B cell (primary cell): ENCODE measurements at regions of chr2 and their contacts with region 1.

Region 1: GRCh38 chr2:136052369-136053362 is 65.3 kb downstream of the CXCR4 start:
- DNase-seq: peak; percentile 33
- ATAC-seq: peak; percentile 26
- H3K4me3 ChIP-seq: no peak overlapping the region
- H3K4me3 Mint-ChIP-seq: peak overlapping the region; percentile 52
- H3K27ac ChIP-seq: no peak overlapping the region
- H3K27ac Mint-ChIP-seq: peak overlapping the region; percentile 60
- H3K4me1 ChIP-seq: peaks cover 40% of the 10 kb centered on the region in 2 donors
- H3K4me1 Mint-ChIP-seq: peaks cover 63% of the 10 kb centered on the region
- H3K27me3 ChIP-seq: no peaks in the 10 kb centered on the region
- H3K27me3 Mint-ChIP-seq: no peaks in the 10 kb centered on the region
- CTCF ChIP-seq: no peak

Region 2: DNA sequence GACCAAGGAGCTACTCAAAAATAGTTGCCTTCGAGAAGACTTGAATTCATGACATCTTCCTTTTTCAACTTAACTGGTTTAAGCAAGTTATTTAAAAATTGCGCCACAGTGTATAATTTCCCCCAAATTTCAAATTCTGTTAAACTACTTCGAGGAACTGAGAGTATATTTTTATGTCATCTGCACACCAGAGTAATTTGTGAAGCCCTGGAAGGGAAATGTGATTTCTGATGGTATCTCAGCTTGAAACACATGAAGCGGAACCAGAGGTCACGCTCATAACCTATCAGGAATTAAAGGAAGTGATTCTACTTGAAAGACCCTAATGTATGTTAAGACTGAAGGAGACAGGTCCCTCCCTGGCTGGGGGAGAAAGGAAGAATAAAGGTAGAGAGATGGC is 33.4 kb before region 1 on chr2:
- CTCF ChIA-PET with region 1: no interaction called
- POLR2A ChIA-PET with region 1: no interaction called
- intact Hi-C with region 1: loop called (anchors 5 kb)
- DNase-seq: peak; percentile 77
- ATAC-seq: peak; percentile 81
- H3K4me3 ChIP-seq: no peak overlapping the region
- H3K4me3 Mint-ChIP-seq: peak overlapping the region; percentile 7
- H3K27ac ChIP-seq: peak overlapping the region in 1 of 2 donors; percentile 29
- H3K27ac Mint-ChIP-seq: peak overlapping the region; percentile 71
- H3K4me1 ChIP-seq: peaks cover 18 to 24% of the 10 kb centered on the region in 2 donors
- H3K4me1 Mint-ChIP-seq: peaks cover 30% of the 10 kb centered on the region
- H3K27me3 ChIP-seq: no peaks in the 10 kb centered on the region
- H3K27me3 Mint-ChIP-seq: no peaks in the 10 kb centered on the region
- CTCF ChIP-seq: no peak

Region 3: DNA sequence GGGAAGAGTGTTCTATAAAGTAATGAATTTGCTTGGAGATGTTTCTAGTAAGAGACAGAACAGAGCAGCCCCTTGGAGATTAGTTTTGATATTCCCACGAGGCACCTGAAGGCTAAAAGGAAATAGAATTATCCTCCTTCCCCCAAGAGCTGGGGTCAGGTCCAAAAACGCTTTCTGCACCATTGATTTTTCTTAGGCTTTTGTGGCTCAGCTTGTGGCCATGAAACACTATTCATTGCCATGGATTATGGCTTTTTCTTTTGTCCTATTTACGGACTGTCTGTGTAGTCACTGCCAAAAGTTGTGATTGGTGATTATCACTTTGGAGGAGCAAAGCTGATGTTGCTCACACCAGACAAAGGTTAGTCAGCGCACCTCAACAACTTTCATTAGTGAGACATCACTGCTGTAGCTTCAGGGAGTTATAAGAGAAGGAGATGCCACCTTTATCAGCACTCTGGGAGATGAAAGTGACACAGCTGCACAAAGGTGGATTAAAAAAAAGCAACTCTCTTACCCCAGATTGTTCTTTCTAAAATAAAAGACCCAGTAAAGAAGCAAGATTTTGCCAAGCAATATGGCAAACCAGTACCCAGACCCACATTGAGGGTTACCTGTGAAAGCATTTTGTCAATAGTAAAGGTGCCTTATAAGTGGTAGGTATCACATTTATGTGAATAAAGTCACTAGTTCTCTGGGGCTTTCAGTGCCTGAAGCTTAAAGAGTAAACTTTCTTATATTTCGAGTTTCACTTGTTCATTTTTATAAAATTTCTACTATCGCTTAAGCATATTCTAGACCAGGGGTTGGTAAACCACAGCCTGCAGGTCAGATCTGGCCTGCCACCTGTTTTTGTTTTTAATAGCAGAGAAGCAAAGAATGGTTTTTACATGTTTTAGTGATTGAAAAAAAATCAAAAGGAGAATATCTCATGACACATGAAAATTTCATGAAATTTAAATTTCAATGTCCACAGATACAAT is 54.7 kb after region 1 on chr2:
- CTCF ChIA-PET with region 1: no interaction called
- POLR2A ChIA-PET with region 1: no interaction called
- intact Hi-C with region 1: loop called (anchors 5 kb)
- DNase-seq: peak; percentile 21
- ATAC-seq: no peak
- H3K4me3 ChIP-seq: no peak overlapping the region
- H3K4me3 Mint-ChIP-seq: peak overlapping the region; percentile 46
- H3K27ac ChIP-seq: peak overlapping the region; percentile 14 to 16
- H3K27ac Mint-ChIP-seq: peak overlapping the region; percentile 64
- H3K4me1 ChIP-seq: peaks cover 47 to 49% of the 10 kb centered on the region in 2 donors
- H3K4me1 Mint-ChIP-seq: peaks cover 57% of the 10 kb centered on the region
- H3K27me3 ChIP-seq: no peaks in the 10 kb centered on the region
- H3K27me3 Mint-ChIP-seq: no peaks in the 10 kb centered on the region
- CTCF ChIP-seq: no peak